Breast epithelium (tissue), 4 donors: ENCODE measurements at regions of chr6 and their contacts with region 1.

Region 1: GRCh38 chr6:40074306-40075055 is 140.2 kb upstream of the MOCS1 start:
- DNase-seq: peak in 1 of 2 donors; percentile 28
- H3K4me3 ChIP-seq: no peak overlapping the region
- H3K27ac ChIP-seq: peak overlapping the region in 1 of 2 donors; percentile 24
- H3K4me1 ChIP-seq: no peaks in the 10 kb centered on the region
- H3K27me3 ChIP-seq: peaks cover 0 to 5% of the 10 kb centered on the region in 2 donors
- CTCF ChIP-seq: no peak
- POLR2A ChIP-seq: no peak

Region 2: DNA sequence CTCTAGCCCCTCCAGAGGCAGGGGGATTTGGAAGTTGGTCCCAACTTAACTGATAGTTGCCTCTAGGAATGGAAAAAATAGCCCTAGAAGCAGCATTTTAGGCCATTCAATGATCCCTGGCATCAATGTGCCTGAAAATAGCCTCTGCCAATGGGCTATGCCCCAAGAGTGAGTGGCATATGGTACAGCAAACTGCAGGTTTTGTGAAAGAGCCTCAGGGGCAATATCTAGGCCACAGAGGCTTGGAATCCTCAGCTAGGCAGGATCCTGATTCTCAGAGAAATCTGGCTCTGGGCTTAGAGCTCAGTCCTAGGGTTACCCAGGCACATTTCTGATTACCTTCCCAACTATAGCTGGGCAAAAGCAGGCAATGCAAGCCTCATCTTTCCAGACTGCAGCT is 35.9 kb before region 1 on chr6:
- intact Hi-C with region 1: loop called (anchors 1 kb)
- DNase-seq: no peak
- H3K4me3 ChIP-seq: no peak overlapping the region
- H3K27ac ChIP-seq: no peak overlapping the region
- H3K4me1 ChIP-seq: no peaks in the 10 kb centered on the region
- H3K27me3 ChIP-seq: no peaks in the 10 kb centered on the region
- CTCF ChIP-seq: no peak
- POLR2A ChIP-seq: no peak

Region 3: GRCh38 chr6:40097590-40097989 is 23.1 kb after region 1 on chr6:
- intact Hi-C with region 1: no loop called
- DNase-seq: no peak
- H3K4me3 ChIP-seq: no peak overlapping the region
- H3K27ac ChIP-seq: no peak overlapping the region
- H3K4me1 ChIP-seq: no peaks in the 10 kb centered on the region
- H3K27me3 ChIP-seq: no peaks in the 10 kb centered on the region
- CTCF ChIP-seq: no peak
- POLR2A ChIP-seq: no peak

Region 4: DNA sequence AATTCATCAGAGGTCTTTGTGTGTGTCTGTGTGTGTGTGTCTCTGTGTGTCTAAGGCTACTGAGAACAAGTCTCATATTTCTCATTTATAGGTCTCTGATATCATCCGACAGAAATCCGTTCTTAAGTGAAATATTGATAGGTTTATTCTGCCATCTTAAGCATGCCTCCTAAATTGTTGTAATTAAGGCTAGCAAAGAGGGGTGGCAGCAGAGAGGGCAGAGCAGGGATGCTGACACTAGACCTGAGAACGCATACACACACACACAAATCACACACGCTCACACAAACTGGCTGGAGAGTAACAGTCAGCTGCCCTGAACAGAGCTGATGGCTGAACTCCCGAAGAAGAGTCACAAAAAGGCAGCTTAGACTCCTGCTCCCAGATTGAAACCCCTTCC is 597.6 kb after region 1 on chr6:
- intact Hi-C with region 1: no loop called
- DNase-seq: no peak
- H3K4me3 ChIP-seq: no peak overlapping the region
- H3K27ac ChIP-seq: no peak overlapping the region
- H3K4me1 ChIP-seq: no peaks in the 10 kb centered on the region
- H3K27me3 ChIP-seq: no peaks in the 10 kb centered on the region
- CTCF ChIP-seq: no peak
- POLR2A ChIP-seq: no peak

Region 5: DNA sequence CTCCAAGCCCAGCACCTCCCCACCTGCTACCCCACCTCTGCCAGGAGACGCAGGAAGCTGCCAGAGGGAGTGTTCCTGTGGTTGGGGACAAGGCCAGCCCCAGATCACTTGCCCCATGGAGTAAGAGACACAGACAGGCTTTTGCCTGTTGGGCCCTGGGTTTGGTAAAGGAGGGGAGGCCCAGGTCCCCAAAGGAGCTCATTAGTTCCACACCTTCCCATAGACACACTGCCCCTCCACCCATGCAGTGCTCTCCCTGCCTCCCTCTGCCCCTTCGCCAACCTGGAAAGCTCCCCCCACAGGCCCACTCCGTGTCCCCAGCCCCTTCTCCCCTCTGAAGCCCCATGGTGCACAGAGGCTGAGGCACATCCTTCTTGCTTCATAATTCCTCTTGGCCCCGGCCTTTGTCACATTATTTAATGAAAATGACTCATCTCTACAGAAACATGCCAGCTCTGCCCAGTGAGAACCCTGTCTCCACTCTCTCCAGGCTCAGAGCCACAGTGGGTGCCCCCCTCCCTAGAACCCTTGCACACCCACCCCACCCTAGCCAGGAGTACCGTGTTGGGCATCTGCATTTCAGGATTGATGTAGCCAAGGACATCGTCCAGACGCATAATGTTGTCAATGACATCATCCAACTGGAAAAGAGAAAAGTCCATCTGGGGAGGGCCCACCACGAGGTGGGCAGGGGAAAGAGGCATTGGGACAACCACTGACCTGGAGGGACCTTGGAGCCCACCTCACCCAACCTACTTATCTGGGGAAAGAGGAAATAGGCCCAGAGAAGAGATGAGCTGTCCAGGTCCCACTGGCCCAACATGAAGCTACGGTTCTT is 1614.9 kb after region 1 on chr6:
- intact Hi-C with region 1: no loop called
- DNase-seq: peak; percentile 47 to 64
- H3K4me3 ChIP-seq: no peak overlapping the region
- H3K27ac ChIP-seq: peak overlapping the region; percentile 71 to 74
- H3K4me1 ChIP-seq: peaks cover 0 to 9% of the 10 kb centered on the region in 2 donors
- H3K27me3 ChIP-seq: no peaks in the 10 kb centered on the region
- CTCF ChIP-seq: no peak
- POLR2A ChIP-seq: no peak